Calu3 (cell line): ENCODE measurements at regions of chr20 and their contacts with region 1.

Region 1: DNA sequence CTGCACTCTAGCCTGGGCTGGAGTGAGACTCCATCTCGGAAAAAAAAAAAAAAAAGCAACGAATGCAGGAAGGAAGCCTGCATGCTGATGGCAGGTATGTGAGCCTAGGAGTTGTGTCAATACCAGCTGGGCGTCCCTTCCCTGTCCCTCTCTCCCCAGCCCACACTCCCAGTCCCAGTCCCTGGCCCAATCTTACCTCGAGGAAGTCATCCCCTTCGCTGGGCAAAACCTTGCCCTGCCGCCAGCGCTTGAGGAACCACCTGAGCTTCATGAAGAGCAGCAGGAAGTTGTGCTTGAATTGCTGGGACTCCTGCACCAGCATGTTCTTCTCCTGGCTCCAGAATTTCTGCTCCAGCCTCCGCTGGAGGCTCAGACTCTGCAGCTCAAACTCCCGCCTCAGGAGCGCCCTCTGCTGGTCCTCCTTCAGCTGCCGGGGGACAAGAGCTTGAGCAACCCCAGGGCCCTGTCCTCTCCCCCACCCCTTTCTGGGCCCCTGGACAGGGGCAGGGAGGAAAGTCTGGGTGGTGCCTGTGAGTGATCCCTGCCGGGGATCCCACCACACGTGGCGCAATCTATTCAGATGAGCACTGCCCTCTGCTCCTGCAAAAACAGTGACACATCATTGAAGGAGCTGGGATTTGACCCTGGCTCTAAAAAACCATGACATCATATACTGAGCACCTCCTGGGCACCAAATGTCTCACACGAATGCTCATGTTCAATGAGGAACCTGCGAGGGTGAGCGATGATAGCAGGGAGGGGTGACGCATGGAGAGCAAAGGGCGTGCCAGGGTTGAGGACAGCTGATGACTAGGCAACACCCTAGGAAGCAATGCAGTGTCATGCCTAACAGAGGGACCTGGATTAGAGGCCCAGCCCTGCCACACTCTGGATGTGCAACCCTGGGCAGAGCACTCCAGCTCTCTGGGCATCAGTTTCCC is 35.0 kb upstream of the DSN1 start:
- DNase-seq: peak; percentile 86
- H3K4me3 Mint-ChIP-seq: no peak overlapping the region
- H3K27ac Mint-ChIP-seq: no peak overlapping the region
- H3K4me1 Mint-ChIP-seq: peaks cover 11% of the 10 kb centered on the region
- H3K27me3 Mint-ChIP-seq: no peaks in the 10 kb centered on the region
- CTCF ChIP-seq: peak; percentile 93

Region 2: DNA sequence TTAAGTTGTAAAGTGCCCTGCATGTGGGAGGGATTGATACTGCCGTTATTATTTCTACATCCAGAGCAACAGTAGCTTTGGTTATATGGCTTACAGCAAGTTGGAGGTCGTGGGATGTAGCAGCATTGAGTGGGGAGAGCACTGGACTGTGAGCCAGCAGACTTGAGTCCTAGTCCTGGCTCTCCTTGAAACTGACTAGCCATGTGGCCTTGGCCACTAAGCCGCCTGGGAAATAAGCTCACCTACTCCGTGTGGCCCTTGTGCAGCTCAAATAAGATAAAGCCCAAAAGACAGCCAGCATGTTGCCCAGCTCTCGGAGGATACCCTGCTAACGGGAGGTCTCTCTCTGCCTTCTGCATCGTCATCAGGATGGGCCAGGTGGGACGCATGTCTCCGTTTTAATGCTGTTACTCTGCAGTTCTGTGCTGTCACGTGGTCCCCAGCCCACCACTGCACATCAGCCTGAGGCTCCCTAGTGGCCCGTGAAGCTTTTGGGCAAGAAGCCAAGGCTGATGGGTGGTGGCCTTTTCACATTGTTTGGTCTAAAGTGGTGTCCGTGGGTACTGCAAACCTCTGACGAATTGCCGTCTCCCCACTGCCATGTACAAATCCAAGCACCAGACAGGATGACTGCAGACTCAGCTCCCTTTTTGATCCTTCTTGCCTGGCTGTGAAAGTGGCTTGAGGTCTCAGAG is 646.2 kb before region 1 on chr20:
- CTCF ChIA-PET with region 1: no interaction called
- intact Hi-C with region 1: no loop called
- DNase-seq: no peak
- H3K4me3 Mint-ChIP-seq: no peak overlapping the region
- H3K27ac Mint-ChIP-seq: no peak overlapping the region
- H3K4me1 Mint-ChIP-seq: peaks cover 35% of the 10 kb centered on the region
- H3K27me3 Mint-ChIP-seq: no peaks in the 10 kb centered on the region
- CTCF ChIP-seq: no peak

Region 3: DNA sequence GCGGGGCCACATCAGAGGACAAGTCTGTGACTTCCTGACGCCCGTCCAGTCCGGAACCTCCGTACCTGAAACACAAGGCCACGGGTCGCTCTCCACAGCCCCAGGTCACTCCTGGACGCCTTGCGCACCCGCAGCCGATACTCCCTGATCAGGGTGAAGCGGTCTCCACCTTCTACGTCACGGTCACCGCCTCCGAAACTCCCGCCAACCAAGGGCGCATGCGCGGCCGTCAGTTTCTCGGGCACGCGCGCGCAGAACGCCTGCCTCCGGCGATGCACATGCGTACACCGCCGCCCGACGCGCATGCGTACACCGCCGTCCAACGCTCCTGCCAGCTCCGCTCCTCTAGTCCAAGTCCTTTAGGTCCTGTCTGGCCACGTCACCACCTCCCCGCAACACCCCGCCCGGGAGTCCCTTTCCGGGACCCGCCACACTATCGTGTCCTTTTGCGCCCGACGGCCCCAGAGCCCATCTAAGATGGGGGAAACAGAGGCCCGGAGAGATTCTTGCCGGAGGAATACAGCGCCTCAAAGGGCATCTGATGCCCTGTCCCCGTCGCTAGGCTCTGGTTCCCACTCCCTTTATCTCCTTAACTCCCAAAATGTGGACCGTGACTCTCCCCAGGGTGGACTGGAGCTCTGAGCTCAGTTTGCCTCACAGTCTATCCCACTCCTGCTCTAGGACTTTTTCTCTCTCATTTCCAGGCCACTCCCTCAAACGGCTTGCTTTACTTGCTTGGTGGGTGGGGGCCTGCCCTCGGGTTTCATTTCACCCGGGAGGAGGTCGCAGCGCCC is 34.8 kb before region 1 on chr20 and contains the start of gene DSN1:
- CTCF ChIA-PET with region 1: interaction called, 10 read pairs
- intact Hi-C with region 1: no loop called
- DNase-seq: peak; percentile 100
- H3K4me3 Mint-ChIP-seq: peak within 1 kb of the TSS; percentile 77
- H3K27ac Mint-ChIP-seq: peak within 1 kb of the TSS; percentile 93
- H3K4me1 Mint-ChIP-seq: peaks cover 24% of the 10 kb centered on the region
- H3K27me3 Mint-ChIP-seq: no peaks in the 10 kb centered on the region
- CTCF ChIP-seq: no peak
- total RNA-seq, gene DSN1: 36.7 and 42.5 TPM in 2 replicates

Region 4: DNA sequence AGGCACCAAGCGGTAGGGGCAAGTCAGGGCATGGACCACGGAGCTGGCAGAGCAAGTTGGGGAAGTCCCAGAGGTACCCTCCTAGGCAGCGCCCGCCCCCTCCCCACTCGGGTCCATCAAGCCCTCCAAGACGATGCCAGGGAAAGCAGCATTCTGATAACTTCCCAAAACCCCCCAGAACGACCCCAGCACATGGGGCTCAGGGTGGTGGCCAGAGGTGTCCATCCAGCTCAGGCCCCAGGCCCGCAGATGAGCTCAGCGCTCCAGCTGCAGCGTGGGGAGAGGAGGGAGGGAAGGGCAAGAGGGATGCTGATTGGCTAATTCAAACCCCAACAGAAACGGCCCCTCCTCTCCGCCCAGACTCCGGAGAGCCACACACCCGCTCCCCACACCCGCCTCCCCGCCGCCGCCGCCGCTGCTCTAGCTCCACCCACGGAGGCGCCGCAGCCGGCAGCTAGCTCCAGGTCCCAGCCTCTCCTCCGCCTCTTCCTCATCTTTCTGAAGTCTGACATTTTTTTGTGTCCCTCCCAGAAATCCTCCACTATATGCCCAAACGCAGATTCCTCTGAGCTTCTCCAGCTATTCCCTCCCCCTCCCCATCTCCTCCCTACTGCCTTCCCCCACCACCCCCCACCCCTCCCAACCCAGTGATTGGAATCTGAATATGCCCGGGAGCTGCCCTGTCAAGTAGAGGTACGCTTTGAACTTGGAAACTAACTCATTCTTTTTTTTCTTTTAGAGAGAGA is 27.0 kb after region 1 on chr20:
- CTCF ChIA-PET with region 1: interaction called, 20 read pairs
- intact Hi-C with region 1: no loop called
- DNase-seq: peak; percentile 95
- H3K4me3 Mint-ChIP-seq: peak overlapping the region; percentile 71
- H3K27ac Mint-ChIP-seq: peak overlapping the region; percentile 88
- H3K4me1 Mint-ChIP-seq: peaks cover 16% of the 10 kb centered on the region
- H3K27me3 Mint-ChIP-seq: no peaks in the 10 kb centered on the region
- CTCF ChIP-seq: no peak

Region 5: GRCh38 chr20:36957875-36958667 is 149.5 kb after region 1 on chr20:
- CTCF ChIA-PET with region 1: no interaction called
- intact Hi-C with region 1: no loop called
- DNase-seq: no peak
- H3K4me3 Mint-ChIP-seq: no peak overlapping the region
- H3K27ac Mint-ChIP-seq: no peak overlapping the region
- H3K4me1 Mint-ChIP-seq: peaks cover 20% of the 10 kb centered on the region
- H3K27me3 Mint-ChIP-seq: no peaks in the 10 kb centered on the region
- CTCF ChIP-seq: no peak